Ascending aorta (tissue), 2 donors: ENCODE measurements at regions of chr18 and their contacts with region 1.

Region 1: DNA sequence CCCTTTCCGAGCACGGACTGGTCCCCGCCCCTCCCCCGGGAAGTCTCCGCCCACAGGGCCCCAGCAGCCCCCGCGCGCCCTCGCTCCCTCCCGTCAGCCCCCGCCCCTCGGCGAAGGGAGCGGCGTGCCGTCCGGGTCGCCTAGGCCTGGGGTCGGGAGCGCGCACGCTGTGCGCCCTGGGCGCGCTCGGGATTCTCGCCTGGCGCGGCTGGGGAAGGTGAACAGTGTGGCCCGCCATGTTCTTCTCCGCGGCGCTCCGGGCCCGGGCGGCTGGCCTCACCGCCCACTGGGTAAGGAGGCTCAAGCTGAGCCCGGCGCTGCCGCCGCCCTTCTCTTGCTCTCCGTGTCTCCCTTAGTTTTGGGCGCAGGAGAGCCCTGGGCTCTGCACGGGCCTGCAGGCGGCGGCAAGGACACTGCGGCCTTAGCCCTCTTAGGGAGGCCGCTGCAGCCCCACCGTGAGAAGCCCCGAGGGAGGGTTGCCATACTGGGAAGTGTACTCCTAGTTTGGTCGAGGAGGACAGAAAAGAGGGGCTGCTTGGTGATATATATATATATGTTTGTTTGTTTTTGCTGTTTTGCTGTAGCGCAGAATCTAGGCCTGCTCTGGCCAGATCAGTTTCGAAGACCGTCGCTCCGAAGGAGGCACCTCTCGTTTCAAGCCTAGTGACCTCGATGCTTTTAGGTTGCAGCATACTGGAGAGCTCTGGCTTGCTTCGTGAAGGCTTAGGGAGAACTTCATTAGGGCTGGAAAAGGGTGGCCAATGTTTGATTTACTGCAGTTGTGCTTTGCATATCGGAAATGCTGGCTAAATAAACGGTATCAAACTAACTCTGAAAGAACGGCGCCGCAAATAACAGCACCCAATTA is at the start of gene NDUFV2:
- DNase-seq: peak; percentile 80 to 98
- H3K4me3 ChIP-seq: peak within 1 kb of the TSS; percentile 67 to 77
- H3K27ac ChIP-seq: peak within 1 kb of the TSS; percentile 91 to 92
- H3K4me1 ChIP-seq: peaks cover 3 to 31% of the 10 kb centered on the region in 2 donors
- H3K27me3 ChIP-seq: no peaks in the 10 kb centered on the region
- CTCF ChIP-seq: peak in 1 of 3 experiments; percentile 16
- total RNA-seq, gene NDUFV2: 48.6 TPM

Region 2: DNA sequence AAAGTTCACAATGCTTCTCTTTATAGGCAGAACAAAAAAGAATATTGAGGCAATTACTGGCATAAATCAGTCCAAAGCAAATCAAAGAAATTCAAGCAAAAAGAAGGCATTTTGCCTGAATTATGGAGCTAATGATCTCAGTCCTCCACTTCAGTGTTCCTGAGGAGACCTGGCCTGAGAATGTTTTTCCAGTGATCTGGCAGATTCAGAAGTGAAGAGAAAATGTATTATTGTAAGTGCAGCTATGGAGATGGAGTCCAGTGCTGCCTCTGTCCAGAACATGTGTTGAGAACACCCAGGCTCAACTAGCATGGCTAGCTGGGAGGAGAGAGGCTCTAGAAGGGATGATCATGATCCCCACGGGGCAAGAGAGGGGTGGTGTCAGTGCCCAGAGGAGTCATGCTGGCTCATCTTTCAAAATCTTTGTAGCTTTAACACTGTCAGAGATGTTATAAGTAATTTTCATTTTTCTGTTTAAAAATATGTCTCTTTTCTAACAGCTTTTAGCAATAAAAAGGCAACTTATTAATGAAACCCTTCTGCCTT is 860.5 kb before region 1 on chr18:
- intact Hi-C with region 1: no loop called
- DNase-seq: no peak
- H3K4me3 ChIP-seq: no peak overlapping the region
- H3K27ac ChIP-seq: no peak overlapping the region
- H3K4me1 ChIP-seq: no peaks in the 10 kb centered on the region
- H3K27me3 ChIP-seq: no peaks in the 10 kb centered on the region
- CTCF ChIP-seq: no peak

Region 3: GRCh38 chr18:9117980-9118841 is 15.5 kb after region 1 on chr18:
- intact Hi-C with region 1: loop called (anchors 1 kb)
- DNase-seq: no peak
- H3K4me3 ChIP-seq: peak overlapping the region; percentile 32 to 46
- H3K27ac ChIP-seq: peak overlapping the region; percentile 83 to 86
- H3K4me1 ChIP-seq: peaks cover 7 to 53% of the 10 kb centered on the region in 2 donors
- H3K27me3 ChIP-seq: no peaks in the 10 kb centered on the region
- CTCF ChIP-seq: no peak

Region 4: GRCh38 chr18:9147440-9148202 is 44.9 kb after region 1 on chr18:
- intact Hi-C with region 1: loop called (anchors 2 kb)
- DNase-seq: peak in 1 of 2 donors; percentile 64
- H3K4me3 ChIP-seq: no peak overlapping the region
- H3K27ac ChIP-seq: no peak overlapping the region
- H3K4me1 ChIP-seq: peaks cover 0 to 46% of the 10 kb centered on the region in 2 donors
- H3K27me3 ChIP-seq: no peaks in the 10 kb centered on the region
- CTCF ChIP-seq: peak; percentile 74 to 81 (median 77)

Region 5: GRCh38 chr18:9353596-9353995 is 250.9 kb after region 1 on chr18:
- intact Hi-C with region 1: loop called (anchors 5 kb)
- DNase-seq: no peak
- H3K4me3 ChIP-seq: no peak overlapping the region
- H3K27ac ChIP-seq: peak overlapping the region; percentile 70 to 79
- H3K4me1 ChIP-seq: peaks cover 0 to 33% of the 10 kb centered on the region in 2 donors
- H3K27me3 ChIP-seq: no peaks in the 10 kb centered on the region
- CTCF ChIP-seq: no peak

Region 6: DNA sequence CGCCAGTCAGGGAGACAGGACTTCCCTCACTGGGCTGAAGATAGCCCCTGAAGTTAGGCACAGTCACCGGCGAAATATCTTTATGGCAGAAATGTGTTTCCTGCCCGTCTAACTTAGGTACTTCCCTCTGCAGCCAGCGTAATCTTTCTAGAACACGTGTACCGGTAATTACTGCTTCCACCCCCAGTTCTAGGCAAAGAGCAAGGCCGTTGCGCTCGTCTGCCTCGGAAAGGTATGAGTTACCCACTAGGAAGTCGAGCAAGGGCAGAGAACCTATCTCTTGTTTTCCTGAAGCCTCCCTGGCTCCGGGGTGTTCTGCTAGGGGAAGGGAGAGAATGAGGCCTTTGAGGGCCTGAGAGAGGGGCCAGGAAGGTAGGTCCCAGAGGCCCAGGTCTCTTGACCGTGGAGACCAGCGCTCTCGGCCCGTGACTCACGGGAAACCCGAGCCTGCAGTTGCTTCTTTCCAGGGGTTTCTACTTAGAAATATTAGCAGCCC is 301.9 kb after region 1 on chr18:
- intact Hi-C with region 1: no loop called
- DNase-seq: no peak
- H3K4me3 ChIP-seq: no peak overlapping the region
- H3K27ac ChIP-seq: no peak overlapping the region
- H3K4me1 ChIP-seq: no peaks in the 10 kb centered on the region
- H3K27me3 ChIP-seq: no peaks in the 10 kb centered on the region
- CTCF ChIP-seq: no peak

Region 7: DNA sequence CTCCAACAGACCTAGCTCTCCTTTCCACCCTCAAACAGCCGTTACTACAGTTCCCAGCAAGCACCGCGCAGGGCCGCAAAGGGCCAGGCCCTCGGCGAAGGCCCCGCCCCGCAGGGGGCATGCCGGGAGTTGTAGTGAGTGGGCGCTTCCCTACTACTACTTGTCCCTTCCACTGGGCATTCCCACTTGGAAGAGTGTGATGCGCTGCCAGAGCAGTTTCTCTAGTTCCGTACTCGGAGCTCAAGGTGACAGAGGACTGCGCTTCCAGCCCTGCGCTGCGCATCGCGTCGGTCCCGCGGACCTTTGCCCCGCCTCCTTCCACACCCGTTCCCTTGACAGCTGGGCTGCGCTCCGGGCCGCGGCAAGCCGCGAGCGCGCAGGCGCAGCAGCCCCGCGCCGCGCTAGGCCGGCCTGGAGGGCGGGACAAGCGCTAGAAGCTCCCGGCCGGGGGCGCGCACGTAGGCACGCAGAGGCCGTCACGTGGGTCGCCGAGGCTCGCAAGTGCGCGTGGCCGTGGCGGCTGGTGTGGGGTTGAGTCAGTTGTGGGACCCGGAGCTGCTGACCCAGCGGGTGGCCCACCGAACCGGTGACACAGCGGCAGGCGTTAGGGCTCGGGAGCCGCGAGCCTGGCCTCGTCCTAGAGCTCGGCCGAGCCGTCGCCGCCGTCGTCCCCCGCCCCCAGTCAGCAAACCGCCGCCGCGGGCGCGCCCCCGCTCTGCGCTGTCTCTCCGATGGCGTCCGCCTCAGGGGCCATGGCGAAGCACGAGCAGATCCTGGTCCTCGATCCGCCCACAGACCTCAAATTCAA is 811.0 kb after region 1 on chr18 and contains the start of gene VAPA:
- intact Hi-C with region 1: loop called (anchors 10 kb)
- DNase-seq: peak; percentile 85 to 97
- H3K4me3 ChIP-seq: peak within 1 kb of the TSS; percentile 96 to 97
- H3K27ac ChIP-seq: peak within 1 kb of the TSS; percentile 99 to 100
- H3K4me1 ChIP-seq: peaks cover 3 to 21% of the 10 kb centered on the region in 2 donors
- H3K27me3 ChIP-seq: no peaks in the 10 kb centered on the region
- CTCF ChIP-seq: no peak
- total RNA-seq, gene VAPA: 109 TPM